OCI-LY7 (cell line): ENCODE measurements at regions of chr2 and their contacts with region 1.

Region 1: GRCh38 chr2:127776122-127776780 is 34.7 kb downstream of the WDR33 start:
- DNase-seq: no peak
- H3K4me3 ChIP-seq: no peak overlapping the region
- H3K27ac ChIP-seq: peak overlapping the region; percentile 3
- H3K4me1 ChIP-seq: peaks cover 28% of the 10 kb centered on the region
- CTCF ChIP-seq: no peak

Region 2: GRCh38 chr2:127763776-127764175 is 12.5 kb before region 1 on chr2:
- CTCF ChIA-PET with region 1: no interaction called
- POLR2A ChIA-PET with region 1: interaction called, 13 read pairs
- intact Hi-C with region 1: no loop called
- DNase-seq: no peak
- H3K4me3 ChIP-seq: no peak overlapping the region
- H3K27ac ChIP-seq: no peak overlapping the region
- H3K4me1 ChIP-seq: no peaks in the 10 kb centered on the region
- CTCF ChIP-seq: no peak